ENCODE measurements at regions of chr16 and their contacts with region 1.

Region 1: GRCh38 chr16:65097296-65097695 is 24.6 kb downstream of the CDH11 start:
- DNase-seq: no peak
- H3K4me3 ChIP-seq: no peak overlapping the region
- H3K27ac ChIP-seq: no peak overlapping the region
- H3K4me1 ChIP-seq: peaks cover 11% of the 10 kb centered on the region
- H3K27me3 ChIP-seq: no peaks in the 10 kb centered on the region
- CTCF ChIP-seq: no peak

Region 2: DNA sequence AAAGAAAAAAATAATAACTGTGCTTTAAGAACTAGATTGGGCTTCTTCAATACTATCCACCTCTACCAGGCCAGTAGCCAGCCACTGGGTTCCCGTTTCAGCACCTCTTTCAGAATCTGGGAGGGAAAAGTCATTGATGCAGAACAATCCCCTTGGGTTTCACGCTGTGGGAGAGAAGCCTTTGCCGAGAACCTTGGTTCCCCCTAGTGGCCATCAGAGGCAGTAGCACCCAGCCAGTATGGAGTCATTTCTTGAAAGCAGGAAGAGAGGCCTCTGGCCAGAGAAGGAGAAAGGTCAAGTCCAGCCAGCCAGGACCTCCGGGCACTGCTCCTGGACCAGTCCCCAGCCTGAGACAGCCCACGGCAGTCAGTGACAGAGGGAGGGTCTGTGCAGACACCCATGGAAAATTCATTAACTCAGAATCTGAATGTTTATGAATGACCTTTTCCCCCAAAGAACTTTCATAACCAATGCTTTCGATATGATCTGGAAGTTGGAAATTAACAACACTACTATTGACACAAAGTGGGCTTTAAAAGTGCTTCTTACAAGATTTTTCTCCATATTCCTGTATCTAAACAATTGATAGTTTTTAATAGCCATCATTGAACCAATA is 1218.0 kb after region 1 on chr16:
- CTCF ChIA-PET with region 1: interaction called, 24 read pairs
- dilution Hi-C with region 1: no loop called
- in situ Hi-C with region 1: no loop called
- intact Hi-C with region 1: no loop called
- DNase-seq: peak; percentile 38
- H3K4me3 ChIP-seq: no peak overlapping the region
- H3K27ac ChIP-seq: no peak overlapping the region
- H3K4me1 ChIP-seq: no peaks in the 10 kb centered on the region
- H3K27me3 ChIP-seq: no peaks in the 10 kb centered on the region
- CTCF ChIP-seq: peak; percentile 98 to 99